Activated B cell treated with CpG ODN at 0.5 μM for 24 hours (primary cell): ENCODE measurements at regions of chr16 and their contacts with region 1.

Region 1: GRCh38 chr16:56681939-56682702 is at the start of gene MT1X:
- DNase-seq: peak; percentile 85
- ATAC-seq: peak; percentile 98
- H3K4me3 Mint-ChIP-seq: peak within 1 kb of the TSS; percentile 93
- H3K27ac Mint-ChIP-seq: peak within 1 kb of the TSS; percentile 84
- H3K4me1 Mint-ChIP-seq: peaks cover 11% of the 10 kb centered on the region
- H3K27me3 Mint-ChIP-seq: peaks cover 3% of the 10 kb centered on the region
- CTCF ChIP-seq: no peak
- total RNA-seq, gene MT1X: 36.3 and 48.9 TPM in 2 replicates

Region 2: GRCh38 chr16:56519459-56520250 is 162.5 kb before region 1 on chr16 and contains the start of gene BBS2:
- CTCF ChIA-PET with region 1: interaction called, 3 read pairs
- POLR2A ChIA-PET with region 1: no interaction called
- intact Hi-C with region 1: loop called (anchors 5 kb)
- DNase-seq: peak; percentile 94
- ATAC-seq: peak; percentile 92
- H3K4me3 Mint-ChIP-seq: peak within 1 kb of the TSS; percentile 87
- H3K27ac Mint-ChIP-seq: peak within 1 kb of the TSS; percentile 87
- H3K4me1 Mint-ChIP-seq: peaks cover 20% of the 10 kb centered on the region
- H3K27me3 Mint-ChIP-seq: no peaks in the 10 kb centered on the region
- CTCF ChIP-seq: no peak
- total RNA-seq, gene BBS2: 25.5 and 32.3 TPM in 2 replicates

Region 3: GRCh38 chr16:56576585-56577293 is 105.4 kb before region 1 on chr16:
- CTCF ChIA-PET with region 1: no interaction called
- POLR2A ChIA-PET with region 1: interaction called, 3 read pairs
- intact Hi-C with region 1: loop called (anchors 5 kb)
- DNase-seq: peak; percentile 67
- ATAC-seq: peak; percentile 96
- H3K4me3 Mint-ChIP-seq: no peak overlapping the region
- H3K27ac Mint-ChIP-seq: no peak overlapping the region
- H3K4me1 Mint-ChIP-seq: no peaks in the 10 kb centered on the region
- H3K27me3 Mint-ChIP-seq: peaks cover 3% of the 10 kb centered on the region
- CTCF ChIP-seq: no peak

Region 4: GRCh38 chr16:56632156-56632847 is 49.8 kb before region 1 on chr16 and contains the start of gene MT1M:
- CTCF ChIA-PET with region 1: no interaction called
- POLR2A ChIA-PET with region 1: interaction called, 3 read pairs
- intact Hi-C with region 1: loop called (anchors 1 kb)
- DNase-seq: no peak
- ATAC-seq: no peak
- H3K4me3 Mint-ChIP-seq: peak within 1 kb of the TSS; percentile 65
- H3K27ac Mint-ChIP-seq: no peak within 1 kb of the TSS
- H3K4me1 Mint-ChIP-seq: peaks cover 43% of the 10 kb centered on the region
- H3K27me3 Mint-ChIP-seq: peaks cover 39% of the 10 kb centered on the region
- CTCF ChIP-seq: no peak
- total RNA-seq, gene MT1M: not detected in 2 replicates

Region 5: DNA sequence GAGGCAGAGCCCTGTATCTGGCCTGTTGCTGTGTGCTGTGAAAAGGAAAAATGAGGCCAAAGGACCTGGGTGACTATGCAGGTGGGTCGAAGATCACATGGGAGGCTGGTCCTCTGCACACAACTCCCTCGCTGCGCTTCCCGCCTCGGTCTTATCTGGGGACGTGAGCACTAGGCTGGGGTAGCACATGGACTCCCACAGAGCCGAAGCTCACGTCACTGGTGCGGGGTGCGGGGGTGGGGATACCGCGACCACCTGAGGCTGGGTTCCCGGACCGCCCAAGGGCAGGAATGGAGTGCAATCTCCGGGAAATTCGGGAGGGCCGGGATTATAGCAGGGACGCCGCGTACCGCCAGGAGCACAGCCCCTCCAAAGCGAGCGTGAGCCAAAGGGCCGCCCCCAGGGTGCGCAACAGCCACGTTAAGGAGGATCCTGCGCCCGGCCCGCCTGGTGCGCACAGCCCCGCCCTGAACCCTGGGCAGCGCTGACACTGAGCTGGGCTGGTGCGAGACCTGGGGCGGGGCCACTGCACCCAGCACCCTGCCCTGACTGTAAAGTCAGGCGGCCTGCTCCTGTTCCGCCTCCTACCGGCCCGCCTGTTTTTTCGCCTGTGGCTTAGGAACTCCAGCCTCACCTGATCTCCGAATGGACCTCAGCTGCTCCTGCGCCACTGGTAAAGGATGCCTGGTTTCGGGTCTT is 38.9 kb before region 1 on chr16:
- CTCF ChIA-PET with region 1: no interaction called
- POLR2A ChIA-PET with region 1: no interaction called
- intact Hi-C with region 1: loop called (anchors 5 kb)
- DNase-seq: peak; percentile 42
- ATAC-seq: peak; percentile 99
- H3K4me3 Mint-ChIP-seq: peak overlapping the region; percentile 59
- H3K27ac Mint-ChIP-seq: no peak overlapping the region
- H3K4me1 Mint-ChIP-seq: peaks cover 18% of the 10 kb centered on the region
- H3K27me3 Mint-ChIP-seq: peaks cover 64% of the 10 kb centered on the region
- CTCF ChIP-seq: no peak

Region 6: DNA sequence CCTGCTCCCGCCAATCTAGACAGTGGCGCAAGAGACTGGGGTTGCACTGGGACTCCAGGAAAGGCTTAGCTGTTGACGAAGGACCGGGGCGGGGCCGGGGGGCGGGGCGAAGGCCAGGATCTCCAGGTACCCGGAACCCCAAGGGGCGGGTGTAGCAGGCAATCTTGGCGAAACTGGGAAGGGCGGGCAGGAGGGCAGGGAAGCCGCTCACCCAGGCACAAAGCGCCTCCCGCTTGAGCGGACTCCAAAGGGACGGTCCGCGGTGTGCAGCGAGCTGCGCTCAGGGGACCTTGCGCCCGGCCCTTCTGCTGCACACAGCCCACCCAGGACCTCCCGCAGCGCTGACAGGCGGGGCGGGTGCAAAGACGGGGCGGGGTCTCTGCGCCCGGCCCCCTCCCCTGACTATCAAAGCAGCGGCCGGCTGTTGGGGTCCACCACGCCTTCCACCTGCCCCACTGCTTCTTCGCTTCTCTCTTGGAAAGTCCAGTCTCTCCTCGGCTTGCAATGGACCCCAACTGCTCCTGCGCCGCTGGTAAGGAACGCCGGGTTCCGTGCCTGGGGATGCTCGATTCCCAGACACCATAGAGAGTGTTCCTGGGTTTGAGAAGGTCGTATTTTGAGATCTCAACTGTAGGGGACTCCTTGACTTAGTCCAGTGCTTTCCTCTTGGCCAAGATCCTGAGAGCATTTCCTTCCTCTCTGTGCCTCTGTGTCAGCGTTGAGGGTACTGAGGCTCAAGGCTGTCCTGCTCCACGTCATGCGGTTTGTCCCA is 24.4 kb before region 1 on chr16 and contains the start of gene MT1F:
- CTCF ChIA-PET with region 1: no interaction called
- POLR2A ChIA-PET with region 1: interaction called, 8 read pairs
- intact Hi-C with region 1: loop called (anchors 1 kb)
- DNase-seq: peak; percentile 71
- ATAC-seq: peak; percentile 84
- H3K4me3 Mint-ChIP-seq: peak within 1 kb of the TSS; percentile 92
- H3K27ac Mint-ChIP-seq: peak within 1 kb of the TSS; percentile 88
- H3K4me1 Mint-ChIP-seq: peaks cover 39% of the 10 kb centered on the region
- H3K27me3 Mint-ChIP-seq: peaks cover 16% of the 10 kb centered on the region
- CTCF ChIP-seq: no peak
- total RNA-seq, gene MT1F: 21.4 and 22.8 TPM in 2 replicates

Region 7: DNA sequence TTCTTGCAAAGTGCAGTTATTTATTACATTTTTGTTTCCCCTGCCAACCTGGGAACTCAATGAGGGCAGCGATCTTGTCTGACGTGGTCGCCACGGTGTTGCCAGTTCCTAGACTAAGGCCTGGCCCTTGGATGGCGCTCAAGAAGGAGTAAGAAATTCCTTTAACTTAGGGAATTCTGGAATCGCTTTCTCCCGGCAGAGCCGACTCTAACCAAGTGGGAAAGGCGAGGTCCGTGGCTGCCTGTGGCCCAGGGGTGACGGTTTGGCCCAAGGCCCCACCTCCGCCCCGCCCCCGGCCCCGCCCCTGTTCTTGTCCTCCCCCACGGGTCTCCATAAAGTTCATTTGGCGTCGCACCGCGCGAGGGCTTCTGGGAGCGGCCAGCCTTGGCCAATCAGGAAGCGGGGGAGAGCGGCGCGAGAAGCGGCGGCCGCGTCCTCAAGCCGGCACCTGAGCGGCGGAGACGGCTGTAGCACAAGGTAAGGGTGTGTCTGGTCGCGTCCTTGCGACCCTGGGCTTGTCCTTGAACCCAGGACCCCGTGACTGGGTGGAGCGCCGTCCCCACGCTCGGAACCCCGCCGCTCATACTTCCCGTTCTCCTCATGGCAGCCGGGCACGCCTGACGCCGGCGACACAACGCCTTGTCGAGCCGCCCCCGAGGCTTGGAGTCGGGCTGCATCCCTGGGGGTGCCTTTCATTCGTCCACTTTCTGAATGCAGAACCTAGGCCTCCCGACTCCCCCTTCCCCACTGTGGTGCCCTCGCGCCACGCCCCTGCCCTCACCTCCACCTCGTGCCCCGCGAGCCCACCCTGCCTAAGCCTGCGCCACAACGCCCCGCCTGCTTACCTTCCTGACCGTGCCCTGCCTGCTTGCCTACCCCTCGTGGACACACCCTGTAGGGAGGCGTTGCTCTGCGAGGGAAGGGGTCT is 47.9 kb after region 1 on chr16 and contains the start of gene NUP93:
- CTCF ChIA-PET with region 1: no interaction called
- POLR2A ChIA-PET with region 1: no interaction called
- intact Hi-C with region 1: loop called (anchors 1 kb)
- DNase-seq: peak; percentile 79
- ATAC-seq: peak; percentile 89
- H3K4me3 Mint-ChIP-seq: peak within 1 kb of the TSS; percentile 90
- H3K27ac Mint-ChIP-seq: peak within 1 kb of the TSS; percentile 84
- H3K4me1 Mint-ChIP-seq: peaks cover 20% of the 10 kb centered on the region
- H3K27me3 Mint-ChIP-seq: no peaks in the 10 kb centered on the region
- CTCF ChIP-seq: no peak
- total RNA-seq, gene NUP93: 104 and 111 TPM in 2 replicates

Region 8: GRCh38 chr16:56898847-56899246 is 216.7 kb after region 1 on chr16:
- CTCF ChIA-PET with region 1: no interaction called
- POLR2A ChIA-PET with region 1: no interaction called
- intact Hi-C with region 1: no loop called
- DNase-seq: no peak
- ATAC-seq: peak; percentile 37
- H3K4me3 Mint-ChIP-seq: no peak overlapping the region
- H3K27ac Mint-ChIP-seq: peak overlapping the region; percentile 67
- H3K4me1 Mint-ChIP-seq: peaks cover 30% of the 10 kb centered on the region
- H3K27me3 Mint-ChIP-seq: no peaks in the 10 kb centered on the region
- CTCF ChIP-seq: no peak

Region 9: GRCh38 chr16:57000271-57001025 is 318.3 kb after region 1 on chr16:
- CTCF ChIA-PET with region 1: no interaction called
- POLR2A ChIA-PET with region 1: no interaction called
- intact Hi-C with region 1: no loop called
- DNase-seq: peak; percentile 40
- ATAC-seq: peak; percentile 72
- H3K4me3 Mint-ChIP-seq: peak overlapping the region; percentile 55
- H3K27ac Mint-ChIP-seq: peak overlapping the region; percentile 90
- H3K4me1 Mint-ChIP-seq: peaks cover 87% of the 10 kb centered on the region
- H3K27me3 Mint-ChIP-seq: no peaks in the 10 kb centered on the region
- CTCF ChIP-seq: no peak